HEK293T (cell line): ENCODE measurements at regions of chr17 and their contacts with region 1.

Region 1: DNA sequence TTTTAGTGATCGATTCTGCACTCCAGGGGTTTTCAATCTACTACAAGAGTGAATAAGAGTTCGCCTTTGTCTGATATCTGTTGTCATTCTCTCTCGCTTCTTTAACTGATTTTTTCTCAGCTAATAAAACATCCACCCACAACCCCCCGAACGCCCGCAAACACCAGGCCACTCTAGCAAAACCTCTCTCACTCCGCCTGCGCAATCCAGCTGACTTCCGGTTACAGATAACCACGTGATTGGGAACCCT is 338 bp upstream of the RPL19 start:
- DNase-seq: peak; percentile 84

Region 2: DNA sequence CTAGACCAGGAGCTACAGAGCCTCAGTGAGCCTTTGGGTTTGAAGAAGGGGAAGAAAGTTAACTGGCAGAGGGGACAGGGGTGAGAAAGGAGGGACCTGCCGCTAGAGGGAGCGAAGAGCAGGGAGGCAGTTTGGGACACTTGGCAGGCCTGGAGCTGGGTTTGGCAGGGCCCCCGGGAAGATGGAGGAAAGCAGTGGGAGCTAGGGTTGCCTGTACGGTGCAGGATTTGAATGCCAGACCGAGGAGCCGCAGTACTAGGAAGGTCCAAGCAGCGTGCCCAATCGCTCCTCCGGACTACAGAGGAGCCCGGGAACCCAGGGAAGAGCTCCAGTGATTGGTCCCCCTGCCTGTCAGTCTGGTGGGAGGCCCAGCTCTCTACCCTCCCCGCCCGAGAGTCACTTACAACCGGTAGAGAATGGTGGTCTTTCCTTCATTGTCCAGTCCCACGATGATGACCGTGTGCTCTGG is 35.0 kb before region 1 on chr17:
- CTCF ChIA-PET with region 1: interaction called, 7 read pairs
- POLR2A ChIA-PET with region 1: interaction called, 22 read pairs
- DNase-seq: peak; percentile 80

Region 3: GRCh38 chr17:39219647-39220154 is 20.0 kb after region 1 on chr17:
- CTCF ChIA-PET with region 1: no interaction called
- POLR2A ChIA-PET with region 1: interaction called, 24 read pairs
- DNase-seq: no peak

Region 4: DNA sequence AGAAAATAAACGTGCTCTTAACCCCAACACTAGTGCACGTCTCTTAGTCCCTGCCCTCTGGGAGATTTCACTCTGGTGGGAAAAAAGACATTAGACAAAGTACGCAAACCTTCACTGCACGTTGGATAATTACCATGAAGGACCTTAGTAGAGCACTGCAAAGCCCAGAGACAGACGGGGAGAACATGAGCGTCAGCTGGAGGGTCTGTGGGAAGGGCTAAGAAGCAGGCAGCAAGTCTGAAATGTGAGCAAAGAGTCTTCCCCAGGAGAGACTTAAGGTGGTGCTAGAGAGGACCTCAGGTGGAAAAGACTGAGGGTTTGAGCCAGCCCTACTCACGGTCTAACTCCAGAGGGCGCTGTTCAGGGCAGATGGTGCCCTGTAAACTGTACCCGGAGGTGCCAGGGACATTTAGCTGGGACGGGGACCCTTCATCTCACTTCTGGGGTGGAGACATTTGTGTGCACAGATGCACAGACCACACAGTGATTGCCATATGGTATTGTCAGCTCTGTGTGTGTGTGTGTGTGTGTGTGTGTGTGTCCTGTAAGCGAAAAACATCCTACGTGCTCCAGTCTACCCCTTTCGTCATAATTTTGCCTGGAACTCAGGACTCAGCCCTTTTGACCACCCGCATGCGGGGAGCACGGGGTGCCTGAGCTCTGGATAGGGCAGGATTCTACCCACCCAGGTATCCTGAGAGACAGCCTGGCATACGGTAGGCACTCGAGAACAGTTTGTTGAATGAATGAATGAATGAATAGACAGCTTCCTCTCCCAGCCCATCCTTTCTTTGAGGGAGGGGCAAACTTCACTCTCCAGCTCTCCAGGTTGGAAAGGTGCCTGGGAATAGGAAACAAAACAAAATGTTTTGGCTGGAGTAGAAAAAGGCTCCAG is 36.1 kb after region 1 on chr17:
- CTCF ChIA-PET with region 1: interaction called, 96 read pairs
- POLR2A ChIA-PET with region 1: interaction called, 36 read pairs
- DNase-seq: peak; percentile 80

Region 5: GRCh38 chr17:39401412-39402243 is 201.9 kb after region 1 on chr17 and contains the start of gene FBXL20:
- CTCF ChIA-PET with region 1: no interaction called
- POLR2A ChIA-PET with region 1: interaction called, 11 read pairs
- DNase-seq: peak; percentile 87